ENCODE measurements at regions of chr10 and their contacts with region 1.

Region 1: DNA sequence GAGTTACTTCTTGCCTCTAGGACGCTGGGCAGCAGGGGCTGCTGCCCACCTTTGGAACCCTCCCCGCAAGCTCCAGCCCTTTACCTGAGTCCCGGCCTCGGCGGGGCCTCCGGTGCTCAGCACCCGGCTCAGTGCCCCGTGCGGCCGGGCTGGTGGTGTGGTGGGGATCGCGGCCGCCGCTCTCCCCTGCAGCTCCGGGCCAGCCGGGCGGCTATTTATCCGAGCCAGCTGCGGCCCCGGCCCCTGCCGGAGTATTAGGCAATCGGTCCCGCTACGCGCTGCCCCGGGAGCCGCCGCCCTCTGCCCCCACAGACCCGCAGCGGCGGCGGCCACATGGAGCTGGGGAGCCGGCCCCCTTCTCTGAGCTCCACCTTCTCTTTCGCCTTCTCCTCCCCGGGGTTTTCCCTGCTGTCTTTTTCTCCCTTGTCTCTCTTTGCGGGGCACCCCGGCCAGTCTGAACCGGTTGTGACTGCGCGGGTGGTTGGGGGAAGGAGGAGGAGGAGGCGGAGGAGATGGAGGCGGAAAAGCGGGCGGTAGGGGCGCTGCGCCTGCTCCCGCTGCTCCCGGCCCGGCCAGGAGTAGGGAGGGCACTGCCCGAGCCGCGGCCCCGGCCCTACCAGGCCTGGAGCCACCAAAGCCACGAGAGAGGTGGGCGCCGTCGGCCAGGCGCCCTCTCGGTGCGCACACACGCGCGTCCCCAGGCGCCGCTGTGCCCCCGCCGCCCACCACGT is at the start of gene SLC16A9:
- DNase-seq: peak; percentile 36 to 46
- ATAC-seq: peak; percentile 81 to 83
- H3K4me3 ChIP-seq: peak within 1 kb of the TSS; percentile 71 to 86 (median 76)
- H3K27ac ChIP-seq: peak within 1 kb of the TSS; percentile 62 to 86 (median 78)
- H3K4me1 ChIP-seq: peaks cover 17 to 19% of the 10 kb centered on the region in 2 donors
- H3K27me3 ChIP-seq: no peaks in the 10 kb centered on the region
- CTCF ChIP-seq: peak; percentile 20 to 57 (median 42)
- POLR2A ChIP-seq: peak in 1 of 2 donors; percentile 15
- total RNA-seq, gene SLC16A9: 0.73 to 7.4 (median 3.3) TPM

Region 2: DNA sequence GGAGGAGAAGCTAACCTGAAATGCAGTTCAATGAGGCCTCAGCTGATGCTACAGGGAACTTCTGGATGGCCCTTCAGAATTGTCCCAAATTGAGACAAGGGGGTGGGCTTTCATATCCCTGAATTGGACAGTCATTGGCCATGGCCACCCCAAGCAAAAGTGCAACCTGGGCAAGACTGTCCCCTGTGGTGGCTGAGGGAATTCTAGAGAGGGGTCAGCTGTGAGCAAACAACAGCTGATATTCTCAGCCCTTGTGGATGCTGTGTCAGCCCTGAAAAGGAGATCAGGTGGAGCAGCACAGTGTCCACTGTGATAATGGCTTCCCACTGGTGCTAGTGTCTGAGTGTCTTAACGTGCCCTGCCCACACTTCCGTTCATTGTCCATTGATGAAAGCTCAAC is 76.5 kb before region 1 on chr10:
- in situ Hi-C with region 1: loop called in 1 of 4 experiments (anchors 10 kb)
- intact Hi-C with region 1: loop called (anchors 5 kb)
- DNase-seq: no peak
- ATAC-seq: no peak
- H3K4me3 ChIP-seq: no peak overlapping the region
- H3K27ac ChIP-seq: no peak overlapping the region
- H3K4me1 ChIP-seq: no peaks in the 10 kb centered on the region
- H3K27me3 ChIP-seq: no peaks in the 10 kb centered on the region
- CTCF ChIP-seq: no peak
- POLR2A ChIP-seq: no peak

Region 3: DNA sequence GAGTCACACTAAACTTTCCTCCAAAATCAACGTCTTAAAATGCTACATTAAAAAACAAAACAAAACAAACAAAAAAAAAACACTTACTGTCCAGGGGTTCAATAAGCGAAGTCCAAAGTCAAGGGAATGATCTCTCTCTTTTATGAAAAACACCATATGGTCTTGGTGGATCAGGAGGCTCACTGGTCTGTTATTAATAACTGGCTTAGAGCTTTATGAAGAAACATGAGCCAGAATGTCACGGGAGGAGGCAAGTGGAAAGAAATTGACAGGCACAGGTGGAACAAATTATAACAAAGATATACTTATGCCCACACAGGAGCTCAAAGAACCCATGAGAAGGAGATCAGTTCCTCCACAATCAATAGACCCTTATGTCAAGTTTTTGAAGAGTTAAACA is 43.7 kb after region 1 on chr10 and contains the start of gene MRLN:
- in situ Hi-C with region 1: no loop called
- intact Hi-C with region 1: loop called (anchors 2 kb)
- DNase-seq: peak; percentile 45 to 56
- ATAC-seq: peak; percentile 91 to 95
- H3K4me3 ChIP-seq: peak within 1 kb of the TSS; percentile 40 to 64 (median 63)
- H3K27ac ChIP-seq: peak within 1 kb of the TSS; percentile 84 to 93 (median 89)
- H3K4me1 ChIP-seq: peaks cover 29 to 32% of the 10 kb centered on the region in 2 donors
- H3K27me3 ChIP-seq: no peaks in the 10 kb centered on the region
- CTCF ChIP-seq: no peak
- POLR2A ChIP-seq: peak; percentile 68 to 86
- total RNA-seq, gene MRLN: 67.7 to 352 (median 188) TPM

Region 4: GRCh38 chr10:59808896-59809643 is 99.5 kb after region 1 on chr10:
- in situ Hi-C with region 1: loop called in 1 of 4 experiments (anchors 10 kb)
- intact Hi-C with region 1: loop called (anchors 2 kb)
- DNase-seq: peak; percentile 82 to 87
- ATAC-seq: peak; percentile 83 to 88
- H3K4me3 ChIP-seq: no peak overlapping the region
- H3K27ac ChIP-seq: peak overlapping the region; percentile 61 to 86 (median 66)
- H3K4me1 ChIP-seq: peaks cover 24 to 33% of the 10 kb centered on the region in 2 donors
- H3K27me3 ChIP-seq: no peaks in the 10 kb centered on the region
- CTCF ChIP-seq: peak; percentile 71 to 85 (median 81)
- POLR2A ChIP-seq: no peak

Region 5: GRCh38 chr10:59817773-59818172 is 108.2 kb after region 1 on chr10:
- in situ Hi-C with region 1: loop called in 1 of 4 experiments (anchors 10 kb)
- intact Hi-C with region 1: no loop called
- DNase-seq: no peak
- ATAC-seq: no peak
- H3K4me3 ChIP-seq: no peak overlapping the region
- H3K27ac ChIP-seq: no peak overlapping the region
- H3K4me1 ChIP-seq: peaks cover 0 to 8% of the 10 kb centered on the region in 2 donors
- H3K27me3 ChIP-seq: no peaks in the 10 kb centered on the region
- CTCF ChIP-seq: no peak
- POLR2A ChIP-seq: no peak